Activated naive CD4-positive, alpha-beta T cell treated with anti-CD3 and anti-CD28 coated beads for 36 hours (primary cell): ENCODE measurements at regions of chr7 and their contacts with region 1.

Region 1: GRCh38 chr7:87345166-87345927 is at the start of gene CROT:
- DNase-seq: peak; percentile 97
- H3K4me3 Mint-ChIP-seq: peak within 1 kb of the TSS; percentile 89
- H3K27ac Mint-ChIP-seq: peak within 1 kb of the TSS; percentile 86
- H3K4me1 Mint-ChIP-seq: peaks cover 32% of the 10 kb centered on the region
- H3K27me3 Mint-ChIP-seq: no peaks in the 10 kb centered on the region
- total RNA-seq, gene CROT: 6.0 to 6.1 TPM

Region 2: DNA sequence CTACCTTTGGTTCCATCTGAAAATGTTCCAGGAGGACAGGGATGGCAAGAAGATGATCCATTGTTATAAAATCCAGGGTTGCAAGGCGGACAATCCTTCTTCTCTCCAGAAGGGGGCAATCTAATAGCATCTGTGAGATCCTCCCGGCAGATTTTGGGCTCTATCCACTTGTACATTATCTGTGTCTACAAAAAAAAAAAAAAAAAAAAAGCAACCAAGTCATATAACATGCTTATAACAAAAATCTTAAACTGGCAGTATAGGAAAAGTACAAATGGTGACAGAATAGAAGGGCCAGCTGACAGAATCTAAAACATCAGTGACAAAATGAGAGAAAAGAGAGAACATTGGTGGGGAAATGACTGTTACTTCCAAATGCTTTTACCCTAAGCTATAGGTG is 418.6 kb before region 1 on chr7:
- CTCF ChIA-PET with region 1: no interaction called
- intact Hi-C with region 1: loop called (anchors 5 kb)
- DNase-seq: peak; percentile 43
- H3K4me3 Mint-ChIP-seq: no peak overlapping the region
- H3K27ac Mint-ChIP-seq: no peak overlapping the region
- H3K4me1 Mint-ChIP-seq: peaks cover 16% of the 10 kb centered on the region
- H3K27me3 Mint-ChIP-seq: peaks cover 2% of the 10 kb centered on the region

Region 3: DNA sequence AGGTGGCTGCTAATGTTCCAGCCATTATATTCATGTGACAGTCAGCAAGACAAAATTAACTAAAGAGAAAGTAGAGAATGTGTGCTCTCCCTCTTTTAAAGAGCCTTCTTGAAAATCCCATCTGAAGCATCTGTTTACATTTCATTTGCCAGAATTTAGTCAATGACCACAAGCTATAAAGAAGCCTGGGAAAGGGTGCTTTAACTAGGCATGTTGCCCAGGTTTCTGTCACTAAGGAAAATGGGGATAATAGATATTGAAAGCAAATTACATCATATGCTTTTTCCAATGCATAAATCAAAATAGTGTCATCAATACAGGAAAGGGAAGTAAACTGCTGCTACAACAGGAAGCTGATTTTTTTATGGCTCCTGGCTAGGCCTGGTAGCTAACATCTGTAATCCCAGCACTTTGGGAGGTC is 353.6 kb before region 1 on chr7:
- CTCF ChIA-PET with region 1: no interaction called
- intact Hi-C with region 1: no loop called
- DNase-seq: no peak
- H3K4me3 Mint-ChIP-seq: no peak overlapping the region
- H3K27ac Mint-ChIP-seq: peak overlapping the region; percentile 57
- H3K4me1 Mint-ChIP-seq: peaks cover 7% of the 10 kb centered on the region
- H3K27me3 Mint-ChIP-seq: no peaks in the 10 kb centered on the region

Region 4: GRCh38 chr7:87059525-87060287 is 285.6 kb before region 1 on chr7 and contains the start of gene ELAPOR2:
- CTCF ChIA-PET with region 1: no interaction called
- intact Hi-C with region 1: loop called (anchors 1 kb)
- DNase-seq: peak; percentile 79
- H3K4me3 Mint-ChIP-seq: peak within 1 kb of the TSS; percentile 71
- H3K27ac Mint-ChIP-seq: no peak within 1 kb of the TSS
- H3K4me1 Mint-ChIP-seq: peaks cover 12% of the 10 kb centered on the region
- H3K27me3 Mint-ChIP-seq: peaks cover 5% of the 10 kb centered on the region
- total RNA-seq, gene ELAPOR2: 3.2 to 3.9 TPM

Region 5: GRCh38 chr7:87173471-87173870 is 171.9 kb before region 1 on chr7:
- CTCF ChIA-PET with region 1: no interaction called
- intact Hi-C with region 1: no loop called
- DNase-seq: no peak
- H3K4me3 Mint-ChIP-seq: no peak overlapping the region
- H3K27ac Mint-ChIP-seq: peak overlapping the region; percentile 39
- H3K4me1 Mint-ChIP-seq: peaks cover 24% of the 10 kb centered on the region
- H3K27me3 Mint-ChIP-seq: no peaks in the 10 kb centered on the region

Region 6: DNA sequence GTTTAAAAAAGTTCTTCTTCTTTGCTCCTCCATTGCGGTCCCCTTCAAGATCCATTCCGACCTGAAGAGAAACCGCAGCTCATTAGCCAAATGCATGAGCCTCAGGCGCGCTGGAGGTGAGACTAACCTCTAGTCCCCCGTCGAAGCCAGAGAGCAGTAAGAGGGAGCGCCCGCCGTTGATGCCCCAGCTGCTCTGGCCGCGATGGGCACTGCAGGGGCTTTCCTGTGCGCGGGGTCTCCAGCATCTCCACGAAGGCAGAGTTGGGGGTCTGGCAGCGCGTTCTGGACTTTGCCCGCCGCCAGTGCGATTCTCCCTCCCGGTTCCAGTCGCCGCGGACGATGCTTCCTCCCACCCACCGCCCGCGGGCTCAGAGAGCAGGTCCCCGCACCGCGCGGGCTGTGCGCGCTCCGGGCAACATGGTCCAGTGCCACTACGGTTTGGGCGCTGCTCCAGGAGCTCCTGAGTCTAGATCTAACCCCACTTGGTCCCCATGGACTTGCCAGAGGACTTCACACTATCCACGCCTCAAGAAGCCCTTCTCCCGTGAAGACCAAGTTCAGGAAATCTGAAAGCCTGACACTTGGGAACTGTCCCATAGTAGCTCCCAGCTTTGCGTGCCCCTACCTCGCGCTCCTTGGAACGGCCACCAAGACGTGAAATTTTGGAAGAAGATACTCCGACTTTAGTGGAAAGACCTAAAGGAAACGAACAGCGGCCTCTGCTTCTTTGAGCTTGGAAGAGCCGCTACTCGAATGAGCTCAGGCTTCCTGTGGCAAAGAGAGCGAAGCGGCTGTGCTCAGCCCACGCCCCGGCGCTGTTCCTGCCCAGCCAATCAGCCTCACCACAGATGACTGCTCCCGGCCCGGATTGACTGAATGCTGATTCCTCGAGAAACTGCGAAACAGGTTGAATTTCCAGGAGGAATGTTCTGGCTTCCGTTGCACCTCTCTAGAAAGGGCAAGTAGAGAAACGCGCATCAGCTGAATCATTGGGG is 255.1 kb after region 1 on chr7 and contains the start of gene ABCB1:
- CTCF ChIA-PET with region 1: no interaction called
- intact Hi-C with region 1: loop called (anchors 1 kb)
- DNase-seq: peak; percentile 73
- H3K4me3 Mint-ChIP-seq: peak within 1 kb of the TSS; percentile 84
- H3K27ac Mint-ChIP-seq: peak within 1 kb of the TSS; percentile 8
- H3K4me1 Mint-ChIP-seq: peaks cover 20% of the 10 kb centered on the region
- H3K27me3 Mint-ChIP-seq: peaks cover 5% of the 10 kb centered on the region
- total RNA-seq, gene ABCB1: 2.3 to 3.5 TPM

Region 7: DNA sequence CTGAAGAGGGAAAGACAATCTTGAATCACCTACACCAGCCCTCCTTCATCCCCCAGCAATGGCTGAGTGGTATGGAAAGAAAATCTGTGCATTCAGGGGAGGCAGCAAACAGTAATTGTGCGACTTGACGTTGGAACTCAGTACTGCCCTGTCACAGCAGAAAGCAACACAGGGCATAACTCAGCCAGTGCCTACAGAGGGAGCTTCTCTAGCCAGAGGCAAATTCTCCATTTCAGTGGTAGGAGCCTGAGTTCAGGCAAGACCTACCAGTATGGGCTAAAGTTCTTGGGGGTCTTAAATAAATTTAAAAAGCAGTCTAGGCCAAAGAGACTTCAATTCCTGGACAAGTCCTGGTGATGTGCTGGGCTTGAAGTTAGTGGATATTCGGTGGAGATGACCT is 384.0 kb after region 1 on chr7:
- CTCF ChIA-PET with region 1: no interaction called
- intact Hi-C with region 1: no loop called
- DNase-seq: no peak
- H3K4me3 Mint-ChIP-seq: no peak overlapping the region
- H3K27ac Mint-ChIP-seq: no peak overlapping the region
- H3K4me1 Mint-ChIP-seq: no peaks in the 10 kb centered on the region
- H3K27me3 Mint-ChIP-seq: peaks cover 2% of the 10 kb centered on the region

Region 8: DNA sequence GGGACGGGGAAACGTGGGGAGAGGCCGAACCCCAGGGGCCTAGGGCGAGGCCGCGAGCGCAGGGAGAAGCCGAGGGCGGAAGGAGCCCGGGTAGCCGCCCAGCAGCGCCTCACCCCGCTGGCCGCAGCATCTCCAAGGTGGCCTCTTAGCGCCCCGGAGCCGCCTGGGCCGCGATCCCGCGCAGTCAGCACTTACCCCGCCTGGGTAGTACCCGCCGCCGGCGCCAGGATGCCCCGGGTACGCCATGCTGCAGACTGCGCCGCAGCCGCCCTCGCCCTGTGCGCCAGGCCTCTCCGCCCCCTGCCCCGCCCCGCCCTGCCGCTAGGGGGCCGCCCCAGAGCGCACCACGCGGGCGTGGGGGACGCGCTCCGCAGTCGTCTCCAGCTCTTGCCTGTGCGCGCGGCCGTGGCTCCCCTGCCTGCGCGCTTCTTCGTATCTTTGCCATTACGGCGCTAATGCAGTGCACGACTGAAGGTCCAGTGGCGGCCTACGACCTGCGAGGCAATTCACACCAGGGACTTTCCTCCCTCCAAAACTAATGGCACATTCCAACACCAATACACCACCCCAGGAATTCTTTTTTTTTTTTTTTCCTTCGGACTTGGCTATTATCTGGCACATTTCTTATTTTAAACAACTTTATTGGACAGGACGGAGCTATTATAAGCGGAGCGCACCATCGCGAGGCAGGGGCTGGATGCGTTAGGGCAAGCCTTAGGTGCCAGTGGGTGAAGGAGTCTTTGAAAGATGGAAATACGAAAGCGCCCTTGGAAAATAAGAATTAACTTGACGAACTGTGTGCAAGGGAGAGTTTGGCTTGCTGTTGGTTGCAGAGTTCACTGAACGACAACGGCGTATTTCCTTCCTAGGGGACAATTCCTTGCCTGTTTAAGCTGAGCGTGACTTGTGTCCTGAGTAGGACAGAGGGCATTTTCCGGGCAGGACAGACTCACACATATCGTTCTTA is 874.7 kb after region 1 on chr7 and contains the start of gene SRI:
- CTCF ChIA-PET with region 1: no interaction called
- intact Hi-C with region 1: loop called (anchors 2 kb)
- DNase-seq: peak; percentile 89
- H3K4me3 Mint-ChIP-seq: peak within 1 kb of the TSS; percentile 89
- H3K27ac Mint-ChIP-seq: peak within 1 kb of the TSS; percentile 88
- H3K4me1 Mint-ChIP-seq: peaks cover 23% of the 10 kb centered on the region
- H3K27me3 Mint-ChIP-seq: no peaks in the 10 kb centered on the region
- total RNA-seq, gene SRI: 152 to 168 TPM